Ascending aorta (tissue), 2 donors: ENCODE measurements at regions of chr14 and their contacts with region 1.

Region 1: GRCh38 chr14:89040460-89041259 is 216.2 kb downstream of the TTC8 start:
- DNase-seq: peak; percentile 60 to 95
- H3K4me3 ChIP-seq: peak overlapping the region; percentile 40 to 44
- H3K27ac ChIP-seq: peak overlapping the region; percentile 81 to 88
- H3K4me1 ChIP-seq: peaks cover 0 to 11% of the 10 kb centered on the region in 2 donors
- H3K27me3 ChIP-seq: no peaks in the 10 kb centered on the region
- CTCF ChIP-seq: peak; percentile 94 to 99 (median 96)

Region 2: GRCh38 chr14:89137514-89138163 is 97.0 kb after region 1 on chr14:
- intact Hi-C with region 1: loop called (anchors 10 kb)
- DNase-seq: peak; percentile 78 to 94
- H3K4me3 ChIP-seq: no peak overlapping the region
- H3K27ac ChIP-seq: peak overlapping the region; percentile 60 to 68
- H3K4me1 ChIP-seq: peaks cover 3 to 11% of the 10 kb centered on the region in 2 donors
- H3K27me3 ChIP-seq: no peaks in the 10 kb centered on the region
- CTCF ChIP-seq: no peak

Region 3: GRCh38 chr14:89178802-89179535 is 138.3 kb after region 1 on chr14:
- intact Hi-C with region 1: loop called (anchors 5 kb)
- DNase-seq: no peak
- H3K4me3 ChIP-seq: no peak overlapping the region
- H3K27ac ChIP-seq: peak overlapping the region; percentile 70 to 76
- H3K4me1 ChIP-seq: peaks cover 5 to 40% of the 10 kb centered on the region in 2 donors
- H3K27me3 ChIP-seq: no peaks in the 10 kb centered on the region
- CTCF ChIP-seq: no peak

Region 4: DNA sequence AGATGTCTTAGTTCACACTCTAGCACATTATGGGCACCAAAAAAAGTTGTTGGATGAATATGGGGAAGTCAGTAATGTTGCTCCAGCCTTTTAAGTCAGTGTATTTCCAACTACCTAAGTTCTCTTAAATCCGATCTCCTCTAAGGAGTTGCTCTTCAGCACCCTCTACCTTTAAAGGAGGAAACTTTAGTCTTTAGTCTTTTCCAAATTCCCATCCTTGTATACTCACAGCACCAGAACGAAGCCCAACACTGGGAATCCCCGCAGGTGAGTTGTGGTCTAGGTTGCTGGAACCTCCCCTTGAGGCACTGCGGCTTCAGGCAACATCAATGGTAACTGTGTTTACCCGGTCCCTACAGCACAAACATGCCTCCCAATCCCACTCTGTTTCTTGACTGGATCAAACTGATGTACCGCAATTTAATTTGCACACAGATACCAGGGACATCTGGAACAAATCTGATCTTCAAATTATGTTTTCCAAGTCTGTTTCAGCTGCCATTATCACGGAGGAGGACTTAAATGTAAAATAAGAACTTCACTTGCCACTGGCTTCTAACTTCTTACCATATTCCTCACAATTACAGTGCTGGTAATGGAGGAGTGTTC is 197.4 kb after region 1 on chr14:
- intact Hi-C with region 1: loop called (anchors 5 kb)
- DNase-seq: no peak
- H3K4me3 ChIP-seq: no peak overlapping the region
- H3K27ac ChIP-seq: peak overlapping the region in 1 of 2 donors; percentile 22
- H3K4me1 ChIP-seq: peaks cover 4 to 19% of the 10 kb centered on the region in 2 donors
- H3K27me3 ChIP-seq: no peaks in the 10 kb centered on the region
- CTCF ChIP-seq: peak; percentile 32 to 56 (median 36)

Region 5: GRCh38 chr14:89406941-89407340 is 366.3 kb after region 1 on chr14:
- intact Hi-C with region 1: no loop called
- DNase-seq: no peak
- H3K4me3 ChIP-seq: no peak overlapping the region
- H3K27ac ChIP-seq: peak overlapping the region; percentile 64 to 82
- H3K4me1 ChIP-seq: peaks cover 0 to 57% of the 10 kb centered on the region in 2 donors
- H3K27me3 ChIP-seq: no peaks in the 10 kb centered on the region
- CTCF ChIP-seq: no peak

Region 6: DNA sequence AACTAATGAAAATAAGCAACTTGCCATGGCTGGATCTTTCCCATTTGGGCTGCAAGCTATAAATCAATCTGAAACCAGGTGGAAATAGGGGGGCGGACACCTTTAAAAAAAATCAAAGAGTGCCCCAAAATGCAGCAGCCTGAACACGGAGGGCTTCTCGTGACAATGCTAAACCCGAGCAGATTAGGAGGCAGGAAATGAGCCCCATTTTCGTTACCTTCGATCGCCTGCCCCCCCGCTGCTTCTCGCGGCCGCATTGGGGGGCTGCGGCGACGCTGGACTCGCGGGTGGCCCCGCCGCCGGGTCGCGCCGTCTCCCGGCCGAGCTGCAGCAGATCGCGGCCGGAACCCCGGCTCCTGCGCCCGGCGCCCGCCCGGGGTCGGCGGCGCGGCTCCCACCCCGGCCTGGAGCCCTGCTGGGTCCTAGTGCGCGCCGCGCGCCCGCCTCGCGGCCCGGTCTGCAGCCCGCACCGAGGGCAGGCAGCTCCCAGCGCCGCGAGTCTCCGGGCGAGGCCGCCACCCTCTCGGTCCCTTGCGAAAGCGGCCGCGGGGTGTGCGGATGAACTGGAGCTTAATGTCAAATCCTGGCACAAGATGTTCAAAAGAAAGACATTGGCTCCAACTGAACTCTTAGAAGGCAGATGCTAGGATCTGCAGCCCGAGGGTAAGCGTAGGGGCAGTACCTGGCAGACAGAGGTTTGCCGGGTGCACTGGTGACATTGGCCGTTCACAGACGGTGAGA is 578.3 kb after region 1 on chr14:
- intact Hi-C with region 1: loop called (anchors 5 kb)
- DNase-seq: peak in 1 of 2 donors; percentile 83
- H3K4me3 ChIP-seq: peak overlapping the region; percentile 87 to 97
- H3K27ac ChIP-seq: peak overlapping the region; percentile 74 to 85
- H3K4me1 ChIP-seq: peaks cover 0 to 14% of the 10 kb centered on the region in 2 donors
- H3K27me3 ChIP-seq: no peaks in the 10 kb centered on the region
- CTCF ChIP-seq: no peak

Region 7: DNA sequence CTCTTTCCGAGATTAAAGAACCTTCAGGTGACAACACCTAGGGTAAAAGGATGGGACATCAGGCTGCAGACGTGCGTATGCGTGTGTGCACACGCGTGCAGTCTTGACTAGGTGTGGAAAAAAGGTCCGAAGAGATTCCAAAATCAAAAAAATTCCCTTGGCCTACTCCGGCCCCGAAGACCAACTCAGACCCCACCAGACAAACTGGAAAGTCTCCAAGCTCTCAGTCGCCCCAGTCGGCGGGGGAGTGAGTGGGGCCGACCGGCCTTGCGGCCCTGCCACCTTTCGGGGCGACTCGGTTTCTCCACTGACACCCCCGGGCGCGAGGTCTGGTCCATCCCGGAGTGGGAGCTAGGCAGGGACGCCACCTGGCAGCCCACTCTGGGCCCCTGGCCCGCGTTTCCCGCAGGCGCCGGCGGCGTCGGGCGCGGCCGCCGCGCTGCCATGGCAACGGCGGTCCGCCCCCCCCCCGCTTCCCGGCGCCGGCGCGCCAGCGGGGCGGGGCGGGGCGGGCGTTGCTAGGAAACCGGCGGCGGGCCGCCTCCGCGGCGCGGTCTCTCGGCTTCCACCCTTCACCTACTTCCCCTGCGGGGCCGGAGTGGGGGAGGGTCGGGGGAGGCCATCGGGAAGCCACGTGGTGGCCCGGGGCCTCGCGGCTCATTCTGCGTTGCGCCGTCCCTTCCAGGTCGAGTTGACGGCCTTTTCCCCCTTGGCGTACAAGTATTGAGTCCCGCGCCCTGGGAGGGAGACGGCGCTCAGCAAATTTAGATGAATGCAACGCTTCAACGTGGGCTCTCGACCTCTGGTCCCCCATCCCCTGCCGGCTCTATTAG is 660.8 kb after region 1 on chr14:
- intact Hi-C with region 1: loop called (anchors 2 kb)
- DNase-seq: peak; percentile 49 to 92
- H3K4me3 ChIP-seq: peak overlapping the region; percentile 55 to 76
- H3K27ac ChIP-seq: peak overlapping the region; percentile 61 to 71
- H3K4me1 ChIP-seq: peaks cover 0 to 12% of the 10 kb centered on the region in 2 donors
- H3K27me3 ChIP-seq: no peaks in the 10 kb centered on the region
- CTCF ChIP-seq: no peak